ENCODE measurements at regions of chr4 and their contacts with region 1.

Region 1: DNA sequence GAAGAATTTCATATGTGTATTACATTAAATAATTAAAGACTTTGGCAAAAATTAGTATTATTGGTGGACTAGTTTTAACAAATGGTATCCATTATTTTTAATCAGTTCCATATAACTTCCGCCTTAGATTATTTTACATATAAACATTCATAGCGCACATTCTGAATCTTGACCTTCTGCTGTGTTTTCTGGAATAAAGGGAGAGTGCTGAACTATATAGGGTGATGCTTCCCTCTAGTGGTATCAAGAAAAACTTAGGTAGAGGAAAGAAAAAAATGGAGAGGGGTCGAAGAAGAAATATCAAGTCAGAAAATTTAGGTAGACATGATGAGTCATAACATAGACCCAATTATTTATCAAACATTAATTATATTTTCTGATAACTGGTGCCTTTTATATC is 155.6 kb upstream of the PACRGL start:
- DNase-seq: peak; percentile 71
- ATAC-seq: peak; percentile 90
- H3K4me3 ChIP-seq: no peak overlapping the region
- H3K27ac ChIP-seq: no peak overlapping the region
- H3K4me1 ChIP-seq: no peaks in the 10 kb centered on the region
- H3K27me3 ChIP-seq: no peaks in the 10 kb centered on the region
- CTCF ChIP-seq: peak; percentile 76
- POLR2A ChIP-seq: no peak
- RAD21 ChIP-seq: peak; percentile 78

Region 2: DNA sequence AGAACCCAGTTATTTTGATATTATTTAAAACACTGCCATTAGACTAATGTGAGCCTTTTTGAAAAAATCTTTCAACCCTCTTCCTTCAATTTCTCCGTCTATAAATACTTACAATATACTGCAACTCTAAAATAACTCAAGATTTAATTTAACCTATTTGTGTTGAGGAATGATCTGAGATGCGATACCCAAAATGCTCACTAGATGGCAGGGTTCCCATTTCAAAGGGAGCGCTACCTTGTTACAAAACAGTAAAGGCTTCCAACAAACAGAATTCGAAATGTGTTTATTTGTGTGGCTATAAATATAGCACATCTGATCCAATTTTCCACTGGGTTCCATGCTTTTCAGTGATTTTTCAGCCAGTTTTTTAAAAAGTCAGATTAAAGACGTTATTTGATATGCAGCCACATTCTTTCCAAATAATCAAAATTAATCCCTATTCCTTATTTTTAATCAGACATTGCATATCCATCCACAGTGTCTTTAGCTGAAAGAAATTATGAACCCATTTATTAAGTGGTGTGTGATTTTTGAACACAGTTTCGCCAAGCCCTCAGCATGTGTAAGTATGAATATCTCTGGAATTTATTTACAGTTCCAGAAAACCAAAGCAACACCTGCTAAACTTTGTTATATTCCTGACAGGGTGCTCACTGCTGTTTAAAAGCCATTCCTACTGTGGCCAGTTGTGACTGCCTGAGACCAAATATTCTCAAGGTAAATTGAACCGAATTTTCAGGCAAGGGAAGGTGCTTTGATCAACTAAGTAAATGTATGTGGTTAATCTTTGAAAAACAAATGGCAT is 1855.1 kb before region 1 on chr4:
- CTCF ChIA-PET with region 1: no interaction called
- POLR2A ChIA-PET with region 1: no interaction called
- dilution Hi-C with region 1: no loop called
- in situ Hi-C with region 1: loop called (anchors 25 kb)
- intact Hi-C with region 1: no loop called
- DNase-seq: peak; percentile 66
- ATAC-seq: peak; percentile 74; the same call in 1 of the 2 replicates
- H3K4me3 ChIP-seq: no peak overlapping the region
- H3K27ac ChIP-seq: no peak overlapping the region
- H3K4me1 ChIP-seq: no peaks in the 10 kb centered on the region
- H3K27me3 ChIP-seq: no peaks in the 10 kb centered on the region
- CTCF ChIP-seq: peak; percentile 82
- POLR2A ChIP-seq: no peak
- RAD21 ChIP-seq: peak; percentile 89

Region 3: DNA sequence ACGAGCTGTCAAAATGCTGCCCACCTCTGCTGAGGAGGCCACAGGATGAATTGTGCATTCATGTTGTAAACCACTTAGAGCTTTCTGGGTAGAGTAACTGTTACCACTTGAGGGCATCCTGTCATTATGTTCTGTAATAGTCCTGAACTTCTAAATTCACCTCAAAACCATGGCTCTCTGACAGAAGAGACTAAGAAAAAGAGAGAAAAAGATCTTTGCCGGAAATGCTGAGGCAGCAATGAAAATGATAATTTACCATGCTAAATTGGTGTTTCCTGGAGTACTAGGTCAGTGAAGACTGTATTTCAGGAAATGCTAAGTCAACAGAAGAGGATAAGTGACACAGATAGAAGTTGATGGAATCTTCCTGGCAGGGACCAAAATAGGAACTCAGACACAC is 1235.3 kb before region 1 on chr4:
- CTCF ChIA-PET with region 1: no interaction called
- POLR2A ChIA-PET with region 1: no interaction called
- dilution Hi-C with region 1: no loop called
- in situ Hi-C with region 1: no loop called
- intact Hi-C with region 1: loop called (anchors 2 kb)
- DNase-seq: peak; percentile 74
- ATAC-seq: peak; percentile 87
- H3K4me3 ChIP-seq: no peak overlapping the region
- H3K27ac ChIP-seq: no peak overlapping the region
- H3K4me1 ChIP-seq: peaks cover 2% of the 10 kb centered on the region; the same call in 1 of the 2 replicates
- H3K27me3 ChIP-seq: no peaks in the 10 kb centered on the region
- CTCF ChIP-seq: peak; percentile 66
- POLR2A ChIP-seq: no peak
- RAD21 ChIP-seq: peak; percentile 76

Region 4: GRCh38 chr4:20313237-20314030 is 231.2 kb before region 1 on chr4:
- CTCF ChIA-PET with region 1: no interaction called
- POLR2A ChIA-PET with region 1: no interaction called
- dilution Hi-C with region 1: no loop called
- in situ Hi-C with region 1: loop called (anchors 10 kb)
- intact Hi-C with region 1: no loop called
- DNase-seq: no peak
- ATAC-seq: no peak
- H3K4me3 ChIP-seq: no peak overlapping the region
- H3K27ac ChIP-seq: no peak overlapping the region
- H3K4me1 ChIP-seq: no peaks in the 10 kb centered on the region
- H3K27me3 ChIP-seq: no peaks in the 10 kb centered on the region
- CTCF ChIP-seq: no peak
- POLR2A ChIP-seq: no peak
- RAD21 ChIP-seq: no peak

Region 5: GRCh38 chr4:20589436-20589835 is 44.8 kb after region 1 on chr4:
- CTCF ChIA-PET with region 1: no interaction called
- POLR2A ChIA-PET with region 1: no interaction called
- dilution Hi-C with region 1: no loop called
- in situ Hi-C with region 1: no loop called
- intact Hi-C with region 1: no loop called
- DNase-seq: no peak
- ATAC-seq: no peak
- H3K4me3 ChIP-seq: no peak overlapping the region
- H3K27ac ChIP-seq: no peak overlapping the region
- H3K4me1 ChIP-seq: no peaks in the 10 kb centered on the region
- H3K27me3 ChIP-seq: no peaks in the 10 kb centered on the region
- CTCF ChIP-seq: no peak
- POLR2A ChIP-seq: no peak
- RAD21 ChIP-seq: no peak

Region 6: DNA sequence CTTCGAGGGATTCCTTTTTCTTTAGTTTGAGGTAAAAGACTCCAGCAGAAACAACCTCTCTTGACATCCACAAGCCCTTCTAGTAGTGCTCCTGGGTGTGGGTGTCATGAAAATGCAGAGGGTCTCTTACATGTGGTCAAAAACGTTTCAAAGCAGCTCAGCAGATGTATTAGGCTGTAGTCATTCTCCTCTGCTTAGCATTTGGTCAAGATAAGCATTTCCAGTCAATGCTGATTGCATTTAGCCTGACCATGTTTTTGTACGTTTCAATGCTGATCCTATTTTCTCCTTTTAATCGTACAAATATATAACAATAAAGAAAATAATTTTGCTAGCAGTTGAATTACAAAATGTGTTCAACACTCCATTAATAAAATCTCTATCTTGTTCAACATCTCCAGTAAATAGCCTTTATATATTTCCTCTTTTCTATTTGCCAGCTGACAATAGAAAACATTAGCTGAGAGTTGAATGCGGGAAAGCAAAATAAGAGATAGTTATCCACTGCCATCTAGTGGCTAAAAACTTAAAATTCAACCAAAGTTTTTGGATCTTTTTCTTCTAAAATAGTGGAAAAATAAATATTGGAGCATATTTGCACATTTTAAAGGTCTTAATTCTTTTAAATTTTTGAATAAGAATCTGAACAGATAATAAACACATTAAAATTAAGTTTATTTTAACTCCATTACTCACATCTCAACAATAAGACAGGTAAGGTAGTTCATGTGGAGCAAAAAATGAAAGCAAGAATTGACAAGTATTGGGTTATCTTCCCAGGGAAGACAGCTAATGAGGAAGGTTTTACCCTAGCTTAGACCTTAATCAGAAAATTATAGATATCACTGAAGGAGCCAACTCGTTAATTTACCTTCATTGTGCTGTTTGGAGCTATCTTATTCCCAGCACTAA is 140.5 kb after region 1 on chr4:
- CTCF ChIA-PET with region 1: interaction called, 5 read pairs
- POLR2A ChIA-PET with region 1: no interaction called
- dilution Hi-C with region 1: no loop called
- in situ Hi-C with region 1: loop called (anchors 10 kb)
- intact Hi-C with region 1: loop called (anchors 2 kb)
- DNase-seq: peak; percentile 27
- ATAC-seq: peak; percentile 27; the same call in 1 of the 2 replicates
- H3K4me3 ChIP-seq: no peak overlapping the region
- H3K27ac ChIP-seq: no peak overlapping the region
- H3K4me1 ChIP-seq: no peaks in the 10 kb centered on the region
- H3K27me3 ChIP-seq: peaks cover 5% of the 10 kb centered on the region
- CTCF ChIP-seq: peak; percentile 73
- POLR2A ChIP-seq: no peak
- RAD21 ChIP-seq: peak; percentile 73

Region 7: DNA sequence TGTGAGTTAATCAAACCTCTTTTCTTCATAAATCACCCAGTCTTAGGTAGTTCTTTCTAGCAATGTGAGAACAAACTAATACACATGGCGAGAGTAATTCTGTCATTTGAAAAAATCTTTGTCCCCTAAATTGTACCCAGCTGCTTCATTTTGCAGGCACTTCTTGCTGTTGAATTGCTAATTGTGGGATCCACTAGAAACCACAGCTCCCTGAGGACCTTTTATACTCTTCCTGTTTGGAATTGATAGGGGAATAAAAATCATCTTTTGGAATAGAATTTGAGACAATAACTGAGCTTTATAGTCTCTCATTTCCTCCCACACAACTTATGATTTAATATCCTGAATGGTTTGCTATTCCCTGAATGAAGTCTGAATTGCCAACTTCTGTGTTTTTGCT is 325.8 kb after region 1 on chr4:
- CTCF ChIA-PET with region 1: no interaction called
- POLR2A ChIA-PET with region 1: no interaction called
- dilution Hi-C with region 1: no loop called
- in situ Hi-C with region 1: no loop called
- intact Hi-C with region 1: no loop called
- DNase-seq: no peak
- ATAC-seq: no peak
- H3K4me3 ChIP-seq: no peak overlapping the region
- H3K27ac ChIP-seq: no peak overlapping the region
- H3K4me1 ChIP-seq: no peaks in the 10 kb centered on the region
- H3K27me3 ChIP-seq: no peaks in the 10 kb centered on the region
- CTCF ChIP-seq: no peak
- POLR2A ChIP-seq: no peak
- RAD21 ChIP-seq: no peak